ENCODE measurements at regions of chr7 and their contacts with region 1.

Region 1: DNA sequence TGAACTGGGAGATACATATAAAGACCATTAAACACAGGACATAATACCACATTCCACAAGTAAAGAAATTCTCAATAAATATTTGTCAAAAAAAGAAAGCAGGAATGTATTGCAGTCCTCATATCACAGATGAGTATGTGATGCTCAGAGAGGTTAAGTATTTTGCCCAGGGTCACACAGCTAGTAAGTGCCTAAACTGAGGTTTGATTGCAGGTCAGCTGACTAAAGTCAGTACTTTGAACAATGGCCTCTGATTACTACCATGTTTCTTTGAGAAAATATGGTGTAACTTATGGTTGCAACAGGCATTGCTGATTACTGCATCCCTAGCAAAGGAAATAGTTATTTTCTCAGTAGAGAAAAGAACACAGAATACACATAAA is 267.1 kb downstream of the ELMO1 start:
- DNase-seq: no peak
- ATAC-seq: peak; percentile 7; the same call in 1 of the 2 replicates
- H3K4me3 Mint-ChIP-seq: no peak overlapping the region; the same call in 1 of the 2 replicates
- H3K27ac Mint-ChIP-seq: peak overlapping the region; percentile 58; the same call in 1 of the 2 replicates
- H3K4me1 Mint-ChIP-seq: peaks cover 19% of the 10 kb centered on the region
- H3K27me3 Mint-ChIP-seq: no peaks in the 10 kb centered on the region
- CTCF ChIP-seq: no peak

Region 2: DNA sequence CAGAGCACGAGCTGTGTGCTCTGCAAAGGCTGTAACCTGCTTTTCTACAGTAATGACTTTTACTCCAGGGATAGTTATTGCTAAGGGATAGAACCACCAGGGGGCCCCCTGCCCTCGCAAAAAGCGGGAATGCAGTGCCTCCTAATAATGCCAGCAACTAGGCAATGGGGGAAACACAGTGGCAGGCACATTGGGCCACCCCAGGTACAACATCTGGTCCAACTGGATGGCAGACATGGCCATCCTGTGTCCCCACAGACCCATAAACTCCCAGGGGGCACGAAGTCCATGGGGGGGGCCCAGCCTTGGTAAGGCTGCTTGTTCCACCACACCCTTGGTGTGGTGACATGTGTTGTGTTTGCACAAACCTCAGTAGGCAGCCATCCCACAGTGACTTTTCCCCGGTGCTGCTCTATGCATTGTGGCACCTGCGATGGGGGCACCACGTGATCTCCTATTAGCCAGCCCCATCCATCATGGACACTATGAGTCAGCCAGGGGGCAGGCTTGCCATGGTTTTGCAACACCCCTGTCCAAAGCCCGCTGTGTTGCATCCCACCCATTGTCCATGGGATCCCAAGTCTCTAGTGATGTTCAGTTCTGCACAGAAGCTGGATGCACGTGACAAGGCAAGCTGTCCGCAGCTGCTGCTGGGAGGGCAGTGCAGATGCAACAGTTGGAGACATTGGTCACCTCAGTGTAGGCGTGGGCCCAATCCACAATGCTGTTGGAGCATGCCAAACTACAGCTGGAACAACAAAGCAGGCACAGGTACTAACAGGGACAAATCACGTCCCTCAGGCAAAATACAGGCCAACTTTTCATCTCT is 707.9 kb before region 1 on chr7:
- CTCF ChIA-PET with region 1: interaction called, 18 read pairs
- POLR2A ChIA-PET with region 1: no interaction called
- DNase-seq: peak; percentile 79
- ATAC-seq: peak; percentile 89
- H3K4me3 Mint-ChIP-seq: no peak overlapping the region
- H3K27ac Mint-ChIP-seq: no peak overlapping the region
- H3K4me1 Mint-ChIP-seq: no peaks in the 10 kb centered on the region
- H3K27me3 Mint-ChIP-seq: no peaks in the 10 kb centered on the region
- CTCF ChIP-seq: peak; percentile 59

Region 3: DNA sequence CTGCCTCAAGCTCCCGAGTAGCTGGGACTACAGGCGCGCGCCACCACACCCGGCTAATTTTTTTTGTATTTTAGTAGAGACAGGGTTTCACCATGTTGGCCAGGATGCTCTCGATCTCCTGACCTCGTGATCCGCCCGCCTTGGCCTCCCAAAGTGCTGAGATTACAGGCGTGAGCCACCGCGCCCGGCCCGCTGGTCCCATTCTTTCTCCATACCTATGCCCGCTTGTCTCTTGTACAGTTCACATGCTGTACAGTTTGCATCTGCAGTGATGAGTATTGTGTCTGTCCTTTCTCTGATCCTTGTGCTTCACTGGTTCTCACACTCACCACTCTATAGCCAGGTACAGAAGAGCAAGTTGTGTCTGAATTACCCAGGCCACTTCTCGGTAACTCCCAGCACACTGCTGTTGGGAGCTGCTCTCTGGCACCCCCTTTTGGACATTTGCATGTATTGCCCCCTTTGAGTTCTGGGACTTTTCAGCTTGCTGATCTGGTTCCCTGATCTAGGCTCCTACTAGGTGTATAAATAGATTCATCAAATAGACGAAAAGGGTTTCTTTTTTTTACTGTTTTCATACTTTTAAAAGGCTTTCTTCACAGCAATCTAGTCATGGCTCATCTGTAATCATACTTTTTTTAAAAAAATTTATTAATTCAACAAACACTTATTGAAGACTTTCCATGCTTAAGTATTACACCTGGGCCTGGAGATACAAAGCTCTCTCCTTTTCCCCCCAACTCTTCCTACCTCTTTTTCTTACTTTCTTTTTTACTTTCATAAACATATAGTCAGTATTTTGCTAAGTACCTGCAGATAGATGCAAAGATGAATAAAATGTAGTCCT is 510.7 kb before region 1 on chr7:
- CTCF ChIA-PET with region 1: interaction called, 12 read pairs
- POLR2A ChIA-PET with region 1: no interaction called
- DNase-seq: peak; percentile 75
- ATAC-seq: peak; percentile 93
- H3K4me3 Mint-ChIP-seq: no peak overlapping the region
- H3K27ac Mint-ChIP-seq: no peak overlapping the region
- H3K4me1 Mint-ChIP-seq: peaks cover 13% of the 10 kb centered on the region
- H3K27me3 Mint-ChIP-seq: no peaks in the 10 kb centered on the region
- CTCF ChIP-seq: peak; percentile 91

Region 4: DNA sequence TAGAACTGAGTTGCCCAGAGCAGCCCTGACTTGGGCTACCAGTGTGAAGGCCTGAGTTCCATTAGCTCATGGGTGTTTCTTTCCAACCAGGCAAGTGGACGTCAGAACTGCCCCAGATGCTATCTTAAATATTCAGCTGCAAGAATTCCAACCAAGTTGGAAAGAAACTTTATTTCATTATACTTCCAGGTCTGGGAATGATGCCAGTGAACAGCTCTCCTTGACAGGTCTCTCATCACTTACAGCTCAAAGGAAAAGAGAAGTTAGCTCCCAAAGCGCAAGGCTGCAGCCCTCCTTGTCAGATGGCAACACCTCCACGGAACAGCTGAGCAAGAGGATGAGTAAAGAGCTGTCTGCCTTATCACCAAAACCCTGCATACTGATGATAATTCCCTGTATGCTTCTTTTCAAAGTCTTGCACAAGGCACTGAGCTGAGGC is 201.7 kb before region 1 on chr7:
- CTCF ChIA-PET with region 1: interaction called, 34 read pairs
- POLR2A ChIA-PET with region 1: no interaction called
- DNase-seq: no peak
- ATAC-seq: no peak
- H3K4me3 Mint-ChIP-seq: no peak overlapping the region
- H3K27ac Mint-ChIP-seq: no peak overlapping the region
- H3K4me1 Mint-ChIP-seq: peaks cover 14% of the 10 kb centered on the region
- H3K27me3 Mint-ChIP-seq: no peaks in the 10 kb centered on the region
- CTCF ChIP-seq: no peak

Region 5: DNA sequence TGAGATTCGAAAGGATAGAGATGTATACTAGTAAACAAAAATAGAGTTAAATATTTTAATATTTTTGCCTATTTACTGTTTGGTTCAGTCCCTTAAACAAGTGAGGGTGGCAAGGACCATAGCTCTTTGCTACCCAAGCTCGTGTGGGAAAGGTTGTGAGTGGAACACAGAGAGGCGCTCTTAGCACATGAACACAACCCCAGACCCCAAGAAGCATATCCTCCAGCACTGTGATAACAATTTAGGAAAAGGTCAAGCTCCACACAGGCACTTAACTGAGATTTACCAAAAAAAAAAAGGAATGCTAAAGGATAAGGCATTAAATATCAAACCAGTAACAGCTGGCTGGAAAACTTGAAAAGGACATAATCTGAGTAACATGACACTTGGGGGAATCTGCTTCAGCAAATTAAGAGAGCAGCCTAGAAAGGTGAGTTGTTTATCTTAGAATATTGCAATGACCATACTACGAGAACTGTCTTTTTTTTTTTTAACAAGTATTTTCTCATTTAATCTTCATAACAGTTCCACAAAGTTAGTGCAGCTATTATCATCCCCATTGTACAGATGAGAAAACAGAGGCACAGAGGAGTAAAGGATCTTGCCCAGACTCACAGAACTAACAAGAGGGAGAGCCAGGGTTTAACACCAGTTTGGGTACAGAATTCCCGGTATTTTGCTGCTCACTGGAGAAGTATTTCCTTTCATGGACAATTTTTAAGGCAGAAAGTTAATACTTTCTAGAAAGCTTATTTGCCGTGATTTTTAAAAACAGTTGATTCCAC is 153.8 kb before region 1 on chr7:
- CTCF ChIA-PET with region 1: interaction called, 41 read pairs
- POLR2A ChIA-PET with region 1: no interaction called
- DNase-seq: no peak
- ATAC-seq: no peak
- H3K4me3 Mint-ChIP-seq: no peak overlapping the region
- H3K27ac Mint-ChIP-seq: no peak overlapping the region
- H3K4me1 Mint-ChIP-seq: peaks cover 26% of the 10 kb centered on the region
- H3K27me3 Mint-ChIP-seq: no peaks in the 10 kb centered on the region
- CTCF ChIP-seq: no peak

Region 6: GRCh38 chr7:37117292-37117691 is 64.2 kb before region 1 on chr7:
- CTCF ChIA-PET with region 1: interaction called, 10 read pairs
- POLR2A ChIA-PET with region 1: no interaction called
- DNase-seq: peak; percentile 18
- ATAC-seq: peak; percentile 98
- H3K4me3 Mint-ChIP-seq: no peak overlapping the region
- H3K27ac Mint-ChIP-seq: peak overlapping the region; percentile 28; the same call in 1 of the 2 replicates
- H3K4me1 Mint-ChIP-seq: peaks cover 23% of the 10 kb centered on the region
- H3K27me3 Mint-ChIP-seq: no peaks in the 10 kb centered on the region
- CTCF ChIP-seq: no peak

Region 7: GRCh38 chr7:37128327-37129034 is 53.1 kb before region 1 on chr7:
- CTCF ChIA-PET with region 1: no interaction called
- POLR2A ChIA-PET with region 1: no interaction called
- DNase-seq: no peak
- ATAC-seq: no peak
- H3K4me3 Mint-ChIP-seq: no peak overlapping the region
- H3K27ac Mint-ChIP-seq: no peak overlapping the region
- H3K4me1 Mint-ChIP-seq: no peaks in the 10 kb centered on the region
- H3K27me3 Mint-ChIP-seq: no peaks in the 10 kb centered on the region
- CTCF ChIP-seq: no peak

Region 8: DNA sequence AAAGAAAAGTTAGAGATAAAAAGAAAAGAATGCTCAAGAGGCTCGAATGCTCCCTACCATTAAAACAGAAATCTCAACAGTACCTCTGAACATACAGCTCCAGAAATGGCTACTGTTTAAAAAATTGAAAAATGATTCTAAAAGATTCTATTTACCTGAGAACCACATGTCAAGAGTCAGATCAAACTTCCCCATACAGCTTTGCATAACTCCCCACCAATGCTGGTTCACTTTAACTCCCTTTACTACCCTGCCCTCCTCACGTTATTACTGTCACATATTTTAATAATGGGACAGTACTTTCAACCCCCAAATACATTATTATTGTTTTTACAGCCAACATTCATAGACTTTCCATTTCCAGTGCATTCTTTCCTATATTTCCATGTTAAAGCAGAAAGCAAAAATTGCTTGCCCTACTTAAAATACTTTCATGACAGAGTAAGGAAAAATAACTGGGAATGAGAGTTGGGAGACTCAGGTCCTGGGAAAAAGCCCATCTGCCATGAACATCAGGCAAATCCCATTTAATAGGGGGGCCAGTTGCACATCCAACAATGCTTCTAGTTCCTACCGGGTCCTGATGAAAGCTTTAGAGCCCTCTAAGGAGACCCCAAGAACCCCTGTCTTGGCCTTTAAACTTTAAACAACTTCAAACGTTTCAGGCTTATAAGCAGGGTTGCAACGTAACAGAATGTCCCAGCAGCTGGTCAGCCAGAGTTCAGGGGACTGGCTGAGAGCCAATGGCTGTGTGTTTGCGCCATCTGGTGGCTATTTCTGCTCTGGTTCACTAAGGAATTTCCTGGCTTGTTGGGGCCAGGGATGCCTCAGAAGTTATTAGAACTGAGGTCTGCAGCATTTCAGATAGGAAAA is 19.7 kb after region 1 on chr7:
- CTCF ChIA-PET with region 1: interaction called, 29 read pairs
- POLR2A ChIA-PET with region 1: no interaction called
- DNase-seq: peak; percentile 85
- ATAC-seq: peak; percentile 93
- H3K4me3 Mint-ChIP-seq: no peak overlapping the region
- H3K27ac Mint-ChIP-seq: no peak overlapping the region
- H3K4me1 Mint-ChIP-seq: peaks cover 14% of the 10 kb centered on the region
- H3K27me3 Mint-ChIP-seq: no peaks in the 10 kb centered on the region
- CTCF ChIP-seq: peak; percentile 33

Region 9: DNA sequence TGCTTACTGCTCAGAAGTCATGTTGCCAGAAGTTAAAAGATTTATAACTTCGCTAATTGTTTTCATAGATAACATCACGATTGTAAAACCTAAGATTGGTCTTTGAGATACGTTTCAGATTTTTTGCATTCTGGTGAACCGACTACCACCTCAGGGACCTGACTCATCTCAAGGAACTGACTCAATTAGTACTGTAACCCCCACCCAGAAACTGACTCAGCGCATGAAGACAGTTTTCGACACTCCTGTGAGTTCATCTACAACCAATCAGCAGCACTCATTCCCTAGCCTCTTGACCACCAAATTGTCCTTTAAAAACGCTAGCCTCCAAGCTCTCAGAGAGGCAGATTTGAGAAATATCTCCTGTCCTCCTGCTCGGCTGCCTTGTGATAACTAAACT is 194.8 kb after region 1 on chr7:
- CTCF ChIA-PET with region 1: no interaction called
- POLR2A ChIA-PET with region 1: no interaction called
- DNase-seq: no peak
- ATAC-seq: no peak
- H3K4me3 Mint-ChIP-seq: no peak overlapping the region
- H3K27ac Mint-ChIP-seq: no peak overlapping the region
- H3K4me1 Mint-ChIP-seq: peaks cover 24% of the 10 kb centered on the region
- H3K27me3 Mint-ChIP-seq: no peaks in the 10 kb centered on the region
- CTCF ChIP-seq: no peak

Measured in WTC11 (cell line).